Panc1 (cell line): ENCODE measurements at regions of chr1 and their contacts with region 1.

Region 1: GRCh38 chr1:40032240-40032891 is 8.2 kb upstream of the CAP1 start:
- DNase-seq: peak; percentile 48
- ATAC-seq: peak; percentile 90
- H3K4me3 ChIP-seq: no peak overlapping the region
- H3K27ac ChIP-seq: no peak overlapping the region
- H3K4me1 ChIP-seq: 0 out of 2 replicates have a peak, but pooled peaks cover 3% of the 10 kb centered on the region
- H3K27me3 ChIP-seq: peaks cover 3% of the 10 kb centered on the region; the same call in 1 of the 2 replicates
- CTCF ChIP-seq: peak; percentile 79

Region 2: GRCh38 chr1:39816415-39817090 is 215.8 kb before region 1 on chr1:
- CTCF ChIA-PET with region 1: no interaction called
- POLR2A ChIA-PET with region 1: no interaction called
- in situ Hi-C with region 1: no loop called
- intact Hi-C with region 1: loop called (anchors 5 kb)
- DNase-seq: peak; percentile 77
- ATAC-seq: peak; percentile 87
- H3K4me3 ChIP-seq: no peak overlapping the region
- H3K27ac ChIP-seq: no peak overlapping the region
- H3K4me1 ChIP-seq: no peaks in the 10 kb centered on the region
- H3K27me3 ChIP-seq: no peaks in the 10 kb centered on the region
- CTCF ChIP-seq: peak; percentile 92

Region 3: GRCh38 chr1:39919545-39919944 is 112.8 kb before region 1 on chr1:
- CTCF ChIA-PET with region 1: interaction called, 23 read pairs
- POLR2A ChIA-PET with region 1: interaction called, 9 read pairs
- in situ Hi-C with region 1: no loop called
- intact Hi-C with region 1: loop called (anchors 2 kb)
- DNase-seq: peak; percentile 45
- ATAC-seq: peak; percentile 97
- H3K4me3 ChIP-seq: no peak overlapping the region
- H3K27ac ChIP-seq: no peak overlapping the region
- H3K4me1 ChIP-seq: no peaks in the 10 kb centered on the region
- H3K27me3 ChIP-seq: no peaks in the 10 kb centered on the region
- CTCF ChIP-seq: peak; percentile 84; the same call in 1 of the 2 replicates

Region 4: DNA sequence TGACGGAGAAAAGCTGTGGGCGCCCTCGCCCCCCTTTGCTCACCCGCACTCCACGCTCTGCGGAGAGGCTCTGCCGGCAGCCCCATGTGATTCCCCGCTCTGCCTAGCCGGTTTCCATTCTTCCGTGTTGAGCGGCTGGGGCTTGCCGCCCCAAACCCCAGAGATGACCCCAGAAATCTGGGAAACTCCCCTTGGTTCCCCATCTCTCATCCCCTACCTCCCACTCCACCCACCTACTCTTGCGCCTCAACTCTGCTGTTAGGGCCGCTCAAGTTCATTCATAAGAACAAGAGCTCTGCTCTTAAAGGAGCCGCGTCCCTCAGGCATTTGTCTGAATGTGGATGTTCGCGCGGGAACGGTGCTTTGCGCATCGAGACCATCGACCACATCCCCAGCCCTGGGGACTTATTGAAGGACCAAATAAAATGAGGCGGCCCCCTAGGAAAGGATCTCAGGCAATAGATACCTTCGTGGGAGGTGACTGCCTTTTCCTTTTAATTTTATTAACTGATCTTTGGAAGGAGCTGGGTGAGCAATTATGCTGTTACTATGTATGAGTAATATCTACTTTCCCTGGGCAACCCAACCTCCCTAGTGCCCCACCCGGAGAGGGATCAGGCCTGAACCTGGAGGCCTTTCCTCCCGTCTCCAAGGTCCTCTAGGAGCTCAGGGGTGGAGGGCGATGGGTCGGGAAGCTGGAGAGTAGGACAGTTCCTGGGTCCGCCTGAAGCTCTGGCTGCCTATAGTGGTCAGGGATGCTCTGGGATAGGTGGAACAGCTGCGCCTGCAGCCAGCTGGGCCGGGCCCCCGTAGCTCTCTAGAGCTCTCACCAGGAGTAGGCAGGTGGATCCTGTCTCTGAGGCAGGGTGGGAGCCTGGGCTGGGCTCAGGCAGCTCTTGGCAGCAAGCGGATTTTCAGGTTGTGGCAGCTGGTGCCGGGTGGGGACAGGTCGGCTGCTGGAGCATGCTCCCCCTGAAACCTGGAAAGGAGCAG is 76.5 kb before region 1 on chr1:
- CTCF ChIA-PET with region 1: interaction called, 10 read pairs
- POLR2A ChIA-PET with region 1: interaction called, 5 read pairs
- in situ Hi-C with region 1: no loop called
- intact Hi-C with region 1: no loop called
- DNase-seq: no peak
- ATAC-seq: peak; percentile 58
- H3K4me3 ChIP-seq: peak overlapping the region; percentile 53 to 56
- H3K27ac ChIP-seq: no peak overlapping the region
- H3K4me1 ChIP-seq: peaks cover 7% of the 10 kb centered on the region
- H3K27me3 ChIP-seq: no peaks in the 10 kb centered on the region; the same call in 1 of the 2 replicates
- CTCF ChIP-seq: no peak